A673 (cell line): ENCODE measurements at regions of chr2 and their contacts with region 1.

Region 1: DNA sequence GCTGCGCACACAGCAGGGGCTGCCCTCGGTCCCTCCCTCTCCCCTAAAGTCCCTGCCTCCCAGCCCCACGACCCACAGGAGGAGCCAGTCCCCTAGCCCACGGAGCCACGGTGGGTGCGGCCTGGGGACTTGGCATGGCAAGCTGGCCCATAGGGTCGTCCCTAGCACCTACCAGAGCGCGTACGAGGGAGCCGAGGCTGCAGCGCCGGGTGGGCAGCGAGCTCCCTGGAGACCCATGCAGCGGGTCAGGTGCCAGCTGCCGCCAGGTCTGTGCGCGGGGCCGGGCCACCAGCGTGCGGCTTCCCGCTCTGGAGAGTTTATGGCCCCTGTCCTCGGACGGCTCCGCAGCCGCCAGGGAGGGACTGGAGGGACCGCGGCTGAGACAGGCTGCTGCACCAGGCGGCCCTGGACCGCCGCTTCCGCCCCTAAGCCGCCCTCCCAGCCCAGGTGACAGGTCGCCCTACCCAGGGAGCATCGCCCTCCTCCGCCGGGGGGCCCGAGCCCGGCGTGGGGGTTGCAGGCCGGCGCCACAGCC is 273.6 kb downstream of the CCDC74A start:
- DNase-seq: no peak
- H3K4me3 ChIP-seq: no peak overlapping the region
- H3K27ac ChIP-seq: no peak overlapping the region
- H3K4me1 ChIP-seq: no peaks in the 10 kb centered on the region
- H3K27me3 ChIP-seq: no peaks in the 10 kb centered on the region
- CTCF ChIP-seq: no peak

Region 2: DNA sequence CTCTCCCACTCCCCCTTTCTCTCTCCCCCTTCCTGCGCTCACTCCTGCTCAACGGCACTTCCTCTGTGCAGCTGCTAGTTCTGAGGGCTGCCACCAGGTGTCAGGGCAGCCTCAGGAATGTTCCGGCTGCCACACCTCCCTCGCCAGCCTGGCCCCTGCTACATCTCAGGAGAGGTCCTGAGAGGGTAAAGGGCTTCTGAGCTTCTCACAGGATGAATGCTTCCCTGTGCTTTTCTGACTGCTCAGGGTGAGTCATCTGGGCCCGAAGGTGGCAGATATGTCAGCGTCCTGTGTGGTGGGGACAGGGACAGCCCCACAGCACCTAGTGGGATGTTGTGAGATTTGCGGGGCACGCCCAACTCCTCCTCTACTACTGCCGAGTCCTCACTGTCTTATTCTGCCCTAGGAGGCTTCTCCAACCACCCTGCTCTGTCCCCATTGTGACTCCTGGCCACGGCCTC is 647.2 kb before region 1 on chr2:
- CTCF ChIA-PET with region 1: no interaction called
- POLR2A ChIA-PET with region 1: no interaction called
- intact Hi-C with region 1: loop called (anchors 10 kb)
- DNase-seq: peak; percentile 73
- H3K4me3 ChIP-seq: no peak overlapping the region
- H3K27ac ChIP-seq: no peak overlapping the region
- H3K4me1 ChIP-seq: no peaks in the 10 kb centered on the region
- H3K27me3 ChIP-seq: peaks cover 4% of the 10 kb centered on the region
- CTCF ChIP-seq: peak; percentile 95

Region 3: GRCh38 chr2:131413148-131413747 is 388.0 kb before region 1 on chr2:
- CTCF ChIA-PET with region 1: no interaction called
- POLR2A ChIA-PET with region 1: no interaction called
- intact Hi-C with region 1: loop called (anchors 5 kb)
- DNase-seq: peak; percentile 69
- H3K4me3 ChIP-seq: no peak overlapping the region
- H3K27ac ChIP-seq: no peak overlapping the region
- H3K4me1 ChIP-seq: no peaks in the 10 kb centered on the region
- H3K27me3 ChIP-seq: peaks cover 64% of the 10 kb centered on the region
- CTCF ChIP-seq: peak; percentile 82

Region 4: GRCh38 chr2:131641414-131642206 is 159.7 kb before region 1 on chr2:
- CTCF ChIA-PET with region 1: no interaction called
- POLR2A ChIA-PET with region 1: no interaction called
- intact Hi-C with region 1: no loop called
- DNase-seq: no peak
- H3K4me3 ChIP-seq: no peak overlapping the region
- H3K27ac ChIP-seq: no peak overlapping the region
- H3K4me1 ChIP-seq: no peaks in the 10 kb centered on the region
- H3K27me3 ChIP-seq: peaks cover 55% of the 10 kb centered on the region
- CTCF ChIP-seq: no peak

Region 5: GRCh38 chr2:131682122-131682944 is 118.9 kb before region 1 on chr2:
- CTCF ChIA-PET with region 1: no interaction called
- POLR2A ChIA-PET with region 1: no interaction called
- intact Hi-C with region 1: loop called (anchors 5 kb)
- DNase-seq: peak; percentile 86
- H3K4me3 ChIP-seq: peak overlapping the region; percentile 57
- H3K27ac ChIP-seq: no peak overlapping the region
- H3K4me1 ChIP-seq: no peaks in the 10 kb centered on the region
- H3K27me3 ChIP-seq: no peaks in the 10 kb centered on the region
- CTCF ChIP-seq: peak; percentile 45